Heart right ventricle (tissue), 16 donors: ENCODE measurements at regions of chr4 and their contacts with region 1.

Region 1: DNA sequence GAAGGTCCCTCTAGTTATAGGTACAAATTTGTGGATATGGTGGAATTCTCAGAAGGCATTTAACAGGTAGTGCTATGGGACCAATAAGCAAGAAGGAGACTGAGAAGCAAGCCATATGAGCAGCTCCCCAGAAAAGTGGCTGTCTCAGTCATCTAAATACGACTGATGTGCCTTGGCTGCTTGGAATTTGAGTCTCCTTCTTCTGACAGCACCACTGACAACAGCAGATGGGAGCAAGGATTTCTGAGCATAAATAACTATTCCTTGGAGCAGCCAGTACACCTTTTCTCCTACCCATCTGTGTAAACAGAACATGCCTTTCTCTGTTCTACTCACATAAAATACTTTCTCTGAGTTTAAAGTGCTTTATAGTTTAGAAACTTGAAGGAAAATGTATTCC is 196.2 kb downstream of the GABRG1 start:
- DNase-seq: no peak
- ATAC-seq: no peak
- H3K4me3 ChIP-seq: no peak overlapping the region
- H3K27ac ChIP-seq: no peak overlapping the region
- H3K4me1 ChIP-seq: no peaks in the 10 kb centered on the region
- H3K27me3 ChIP-seq: no peaks in the 10 kb centered on the region
- CTCF ChIP-seq: no peak

Region 2: DNA sequence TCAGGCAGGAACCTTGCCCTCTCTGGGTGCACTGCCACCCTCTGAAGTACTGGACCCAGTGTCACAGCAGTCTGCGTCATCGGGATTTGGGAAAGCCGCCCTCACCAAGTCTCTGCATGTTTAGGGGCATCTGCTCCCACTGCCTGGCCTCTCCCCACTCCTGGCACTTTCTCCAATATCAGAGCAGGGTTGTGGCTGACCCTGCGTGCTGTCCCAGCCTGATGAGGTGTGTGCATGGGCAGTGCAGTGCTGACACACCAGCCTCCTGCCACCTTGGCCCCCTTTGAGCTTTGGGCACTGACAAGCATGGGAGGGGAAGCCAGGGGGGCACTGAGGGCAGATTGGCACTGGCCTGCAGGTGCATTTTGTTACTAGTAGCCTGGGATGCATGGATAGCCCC is 456.3 kb before region 1 on chr4:
- intact Hi-C with region 1: loop called in 1 of 10 experiments (anchors 5 kb)
- DNase-seq: no peak
- ATAC-seq: no peak
- H3K4me3 ChIP-seq: no peak overlapping the region
- H3K27ac ChIP-seq: no peak overlapping the region
- H3K4me1 ChIP-seq: no peaks in the 10 kb centered on the region
- H3K27me3 ChIP-seq: no peaks in the 10 kb centered on the region
- CTCF ChIP-seq: no peak

Region 3: GRCh38 chr4:46900082-46900481 is 972.4 kb after region 1 on chr4:
- intact Hi-C with region 1: no loop called
- DNase-seq: no peak
- ATAC-seq: no peak
- H3K4me3 ChIP-seq: no peak overlapping the region
- H3K27ac ChIP-seq: no peak overlapping the region
- H3K4me1 ChIP-seq: no peaks in the 10 kb centered on the region
- H3K27me3 ChIP-seq: no peaks in the 10 kb centered on the region
- CTCF ChIP-seq: no peak